Activated CD4-positive, alpha-beta T cell treated with anti-CD3 and anti-CD28 coated beads, Interleukin-2, amount 10 ng/mL, durations not matched to agents 24 days and 14 days (primary cell): ENCODE measurements at regions of chr19 and their contacts with region 1.

Region 1: DNA sequence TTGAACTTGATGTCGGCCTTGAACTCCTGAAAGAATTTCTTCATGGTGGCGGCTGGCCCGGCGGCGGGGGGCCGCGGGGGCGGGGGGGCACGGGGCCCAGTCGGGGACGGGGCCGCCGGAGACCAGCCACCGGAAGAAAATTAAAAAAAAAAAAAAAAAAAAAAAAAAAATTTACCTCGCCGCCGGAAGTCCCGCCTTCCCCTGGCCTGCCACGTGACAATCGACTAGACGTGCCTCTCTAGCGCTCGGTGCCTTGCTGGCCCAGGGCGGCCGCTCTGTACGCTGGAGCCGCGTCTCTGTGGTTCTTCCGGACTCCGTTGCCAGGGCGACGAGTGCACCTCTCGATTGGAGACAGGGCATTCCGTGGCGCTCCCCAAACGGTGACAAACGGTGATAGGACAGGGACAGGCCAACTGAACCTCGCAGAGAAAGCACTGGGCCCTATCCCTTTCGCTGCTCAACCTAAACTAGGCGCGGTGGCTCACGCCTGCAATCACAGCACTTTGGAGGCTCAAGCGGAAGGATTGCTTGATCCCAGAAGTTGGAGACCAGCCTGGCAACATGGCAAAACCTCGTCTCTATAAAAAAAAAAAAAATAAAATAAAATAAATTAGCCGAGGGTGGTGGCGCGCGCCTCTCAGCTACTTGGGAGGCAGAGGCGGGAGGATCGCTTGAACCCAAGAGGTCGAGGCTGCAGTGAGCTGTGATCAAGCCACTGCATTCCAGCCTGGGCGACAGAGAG is at the start of gene UBXN6:
- DNase-seq: peak; percentile 100
- H3K4me3 Mint-ChIP-seq: peak within 1 kb of the TSS; percentile 96
- H3K27ac Mint-ChIP-seq: peak within 1 kb of the TSS; percentile 92
- H3K4me1 Mint-ChIP-seq: peaks cover 16% of the 10 kb centered on the region
- H3K27me3 Mint-ChIP-seq: peaks cover 2% of the 10 kb centered on the region
- total RNA-seq, gene UBXN6: 41.2 and 47.2 TPM in 2 replicates

Region 2: GRCh38 chr19:3434712-3435553 is 1022.9 kb before region 1 on chr19:
- intact Hi-C with region 1: loop called (anchors 10 kb)
- DNase-seq: peak; percentile 98
- H3K4me3 Mint-ChIP-seq: peak overlapping the region; percentile 96
- H3K27ac Mint-ChIP-seq: peak overlapping the region; percentile 99
- H3K4me1 Mint-ChIP-seq: peaks cover 16% of the 10 kb centered on the region
- H3K27me3 Mint-ChIP-seq: no peaks in the 10 kb centered on the region

Region 3: GRCh38 chr19:4471403-4472173 is 13.8 kb after region 1 on chr19:
- intact Hi-C with region 1: loop called (anchors 1 kb)
- DNase-seq: peak; percentile 99
- H3K4me3 Mint-ChIP-seq: no peak overlapping the region
- H3K27ac Mint-ChIP-seq: no peak overlapping the region
- H3K4me1 Mint-ChIP-seq: peaks cover 22% of the 10 kb centered on the region
- H3K27me3 Mint-ChIP-seq: no peaks in the 10 kb centered on the region

Region 4: DNA sequence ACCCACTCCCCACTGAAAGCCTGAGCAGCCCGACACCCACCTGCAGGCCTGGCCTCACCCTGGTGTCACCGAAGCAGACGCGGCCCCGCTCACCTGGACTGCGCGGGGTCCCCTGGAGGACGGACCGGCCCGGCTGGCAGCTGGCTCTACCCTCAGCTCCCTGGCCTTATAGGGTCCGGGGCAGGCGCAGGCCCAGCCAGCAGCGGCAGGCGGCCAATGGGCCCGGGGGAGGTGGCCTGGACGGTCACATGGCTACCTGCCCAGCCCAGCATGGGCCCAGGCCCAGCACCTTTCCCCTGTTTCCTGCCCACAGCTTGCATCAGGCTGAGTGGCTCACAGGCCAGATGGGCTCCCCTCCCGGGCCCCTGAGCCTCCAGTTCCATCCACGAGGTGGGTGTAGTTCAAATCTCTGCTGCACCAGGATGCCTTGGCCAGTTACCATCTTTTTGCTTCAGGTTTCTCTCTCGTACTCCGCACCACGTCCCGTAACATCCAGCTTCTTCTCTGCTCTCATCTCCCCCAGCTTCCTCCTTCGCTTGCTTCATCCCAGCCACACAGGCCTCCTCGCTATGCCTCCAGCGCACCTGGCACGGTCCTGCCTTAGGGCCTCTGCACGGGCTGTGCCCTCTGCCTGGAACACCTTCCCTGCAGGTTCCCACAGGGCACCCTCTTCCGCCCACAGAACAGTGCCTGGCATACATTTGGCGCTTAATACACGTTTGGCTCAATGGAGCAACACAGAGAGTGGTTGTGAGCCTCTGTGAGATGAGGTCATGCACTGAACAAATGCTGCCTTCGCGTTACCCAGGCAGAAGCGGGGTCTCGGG is 60.7 kb after region 1 on chr19 and contains the start of gene PLIN4:
- intact Hi-C with region 1: no loop called
- DNase-seq: no peak
- H3K4me3 Mint-ChIP-seq: no peak within 1 kb of the TSS
- H3K27ac Mint-ChIP-seq: no peak within 1 kb of the TSS
- H3K4me1 Mint-ChIP-seq: no peaks in the 10 kb centered on the region
- H3K27me3 Mint-ChIP-seq: peaks cover 2% of the 10 kb centered on the region
- total RNA-seq, gene PLIN4: not detected in 2 replicates